Mammary epithelial cell (primary cell): ENCODE measurements at regions of chr2 and their contacts with region 1.

Region 1: DNA sequence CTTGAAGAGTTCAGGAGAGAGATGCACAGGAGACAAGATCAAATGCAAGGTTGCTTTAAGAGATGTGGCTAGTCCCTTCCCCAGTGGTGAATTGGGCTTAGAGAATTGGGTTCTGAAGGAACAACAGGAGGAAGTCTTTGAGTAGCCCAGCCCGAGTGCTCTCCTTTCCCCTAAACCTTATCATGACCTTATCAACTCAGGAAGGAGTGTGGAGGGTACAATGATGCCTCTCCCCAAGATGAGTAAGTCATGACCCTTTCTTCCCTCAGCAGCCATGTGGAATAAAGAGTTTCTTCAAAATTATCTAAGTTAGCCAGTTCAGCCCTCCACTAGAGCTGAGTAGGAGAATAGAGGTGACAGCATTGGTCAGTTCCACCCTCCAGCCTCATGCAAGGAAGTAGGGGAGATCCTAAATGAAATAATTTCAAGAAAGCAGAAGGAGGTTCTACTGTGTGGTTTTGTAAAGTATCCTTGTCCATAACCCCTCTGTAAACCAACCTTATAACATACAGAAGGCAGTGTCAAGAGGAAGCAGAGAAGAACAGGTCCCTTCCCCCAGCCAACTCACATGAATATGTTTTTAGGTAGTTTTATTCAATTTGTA is 88.4 kb downstream of the ARHGAP15 start:
- DNase-seq: no peak
- H3K4me3 ChIP-seq: no peak overlapping the region
- H3K27ac ChIP-seq: no peak overlapping the region
- H3K4me1 ChIP-seq: no peaks in the 10 kb centered on the region
- H3K27me3 ChIP-seq: no peaks in the 10 kb centered on the region
- CTCF ChIP-seq: no peak

Region 2: DNA sequence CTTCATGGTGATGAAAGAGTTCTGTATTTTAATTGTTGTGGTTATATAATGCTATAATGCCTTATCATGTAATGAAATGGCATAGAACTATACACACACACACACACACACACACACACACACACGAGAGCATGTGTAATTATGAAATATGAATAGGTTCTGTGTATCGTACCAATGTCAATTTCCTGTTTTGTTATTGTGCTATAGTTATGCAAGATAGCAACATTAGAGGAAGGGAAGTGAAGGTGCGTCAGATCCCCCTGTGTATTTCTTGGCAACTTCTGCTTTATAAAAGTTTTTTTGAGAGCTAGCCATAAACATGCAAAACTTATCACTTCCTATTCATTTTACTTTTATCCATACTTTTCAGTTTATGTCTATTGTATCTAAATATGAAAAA is 149.1 kb before region 1 on chr2:
- CTCF ChIA-PET with region 1: no interaction called
- dilution Hi-C with region 1: no loop called
- in situ Hi-C with region 1: no loop called
- intact Hi-C with region 1: no loop called
- DNase-seq: no peak
- H3K4me3 ChIP-seq: no peak overlapping the region
- H3K27ac ChIP-seq: no peak overlapping the region
- H3K4me1 ChIP-seq: peaks cover 20% of the 10 kb centered on the region
- H3K27me3 ChIP-seq: no peaks in the 10 kb centered on the region
- CTCF ChIP-seq: no peak

Region 3: GRCh38 chr2:143110758-143111428 is 106.7 kb before region 1 on chr2:
- CTCF ChIA-PET with region 1: no interaction called
- dilution Hi-C with region 1: no loop called
- in situ Hi-C with region 1: no loop called
- intact Hi-C with region 1: loop called (anchors 1 kb)
- DNase-seq: peak; percentile 45
- H3K4me3 ChIP-seq: no peak overlapping the region
- H3K27ac ChIP-seq: no peak overlapping the region
- H3K4me1 ChIP-seq: peaks cover 7% of the 10 kb centered on the region
- H3K27me3 ChIP-seq: no peaks in the 10 kb centered on the region
- CTCF ChIP-seq: peak; percentile 70 to 74

Region 4: GRCh38 chr2:143162123-143162837 is 55.3 kb before region 1 on chr2:
- CTCF ChIA-PET with region 1: no interaction called
- dilution Hi-C with region 1: no loop called
- in situ Hi-C with region 1: no loop called
- intact Hi-C with region 1: loop called (anchors 1 kb)
- DNase-seq: peak; percentile 21
- H3K4me3 ChIP-seq: no peak overlapping the region
- H3K27ac ChIP-seq: no peak overlapping the region
- H3K4me1 ChIP-seq: no peaks in the 10 kb centered on the region
- H3K27me3 ChIP-seq: peaks cover 2% of the 10 kb centered on the region
- CTCF ChIP-seq: peak; percentile 45 to 64

Region 5: GRCh38 chr2:143177096-143177786 is 40.4 kb before region 1 on chr2:
- CTCF ChIA-PET with region 1: no interaction called
- dilution Hi-C with region 1: no loop called
- in situ Hi-C with region 1: no loop called
- intact Hi-C with region 1: no loop called
- DNase-seq: no peak
- H3K4me3 ChIP-seq: no peak overlapping the region
- H3K27ac ChIP-seq: no peak overlapping the region
- H3K4me1 ChIP-seq: no peaks in the 10 kb centered on the region
- H3K27me3 ChIP-seq: no peaks in the 10 kb centered on the region
- CTCF ChIP-seq: no peak

Region 6: GRCh38 chr2:143205106-143205764 is 12.4 kb before region 1 on chr2:
- CTCF ChIA-PET with region 1: no interaction called
- dilution Hi-C with region 1: no loop called
- in situ Hi-C with region 1: no loop called
- intact Hi-C with region 1: loop called (anchors 1 kb)
- DNase-seq: peak; percentile 50
- H3K4me3 ChIP-seq: no peak overlapping the region
- H3K27ac ChIP-seq: no peak overlapping the region
- H3K4me1 ChIP-seq: no peaks in the 10 kb centered on the region
- H3K27me3 ChIP-seq: no peaks in the 10 kb centered on the region
- CTCF ChIP-seq: peak; percentile 27 to 46